ENCODE measurements at regions of chr4 and their contacts with region 1.

Region 1: DNA sequence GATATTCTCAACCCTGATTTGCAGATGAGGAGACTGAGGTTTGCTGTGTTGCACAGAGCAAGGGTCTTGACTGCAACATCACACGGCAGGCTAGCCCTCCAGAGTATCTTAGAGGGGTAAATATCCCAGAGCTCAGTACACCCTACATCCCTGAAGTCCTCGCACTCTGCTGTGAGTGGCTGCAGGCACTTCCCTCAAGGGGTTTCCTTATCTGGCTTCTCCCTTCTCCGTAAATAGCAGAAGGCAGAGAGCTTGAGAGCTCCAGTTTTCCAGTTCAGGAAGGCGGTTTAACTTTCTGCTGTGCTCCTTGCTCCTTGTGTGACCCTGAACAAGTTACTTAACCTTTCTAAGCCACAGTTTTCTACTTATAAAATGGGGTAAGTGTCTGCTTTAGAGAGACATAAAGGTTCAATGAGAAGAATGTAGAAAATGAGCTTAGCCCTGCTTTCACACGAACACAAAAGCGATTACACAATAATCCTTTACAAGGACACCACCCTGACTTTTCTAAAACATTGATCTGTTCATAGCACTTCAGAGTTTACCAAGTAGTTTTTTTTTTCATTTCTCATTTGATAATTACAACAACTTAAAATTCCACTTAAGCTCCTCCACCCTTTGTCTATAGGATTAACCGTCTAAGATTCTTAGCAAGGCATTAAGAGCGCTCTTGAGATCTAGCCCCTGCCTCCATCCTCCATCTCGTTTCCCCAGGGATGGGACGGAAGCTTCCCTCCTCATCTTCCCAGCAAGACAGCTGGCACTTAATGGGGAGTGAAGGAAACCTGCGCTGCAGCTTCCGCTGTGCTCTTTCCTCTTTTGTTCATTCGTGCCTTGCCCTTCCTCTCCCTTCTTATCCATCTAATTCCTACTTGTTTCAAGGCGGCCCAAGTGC is 68.4 kb downstream of the TAPT1 start:
- DNase-seq: no peak
- ATAC-seq: peak; percentile 21; the same call in 1 of the 2 replicates
- H3K4me3 ChIP-seq: no peak overlapping the region
- H3K27ac ChIP-seq: no peak overlapping the region
- H3K4me1 ChIP-seq: no peaks in the 10 kb centered on the region
- H3K27me3 ChIP-seq: no peaks in the 10 kb centered on the region
- CTCF ChIP-seq: no peak
- POLR2A ChIP-seq: no peak
- RAD21 ChIP-seq: no peak

Region 2: GRCh38 chr4:16183604-16184003 is 25.7 kb after region 1 on chr4:
- CTCF ChIA-PET with region 1: no interaction called
- POLR2A ChIA-PET with region 1: no interaction called
- dilution Hi-C with region 1: no loop called
- in situ Hi-C with region 1: no loop called
- intact Hi-C with region 1: loop called (anchors 2 kb)
- DNase-seq: no peak
- ATAC-seq: no peak
- H3K4me3 ChIP-seq: no peak overlapping the region
- H3K27ac ChIP-seq: no peak overlapping the region
- H3K4me1 ChIP-seq: no peaks in the 10 kb centered on the region
- H3K27me3 ChIP-seq: no peaks in the 10 kb centered on the region
- CTCF ChIP-seq: no peak
- POLR2A ChIP-seq: no peak
- RAD21 ChIP-seq: no peak

Measured in IMR-90 (cell line).